ENCODE measurements at regions of chr15 and their contacts with region 1.

Region 1: GRCh38 chr15:93816815-93817214 is 414.5 kb upstream of the MCTP2 start:
- DNase-seq: no peak
- H3K4me3 ChIP-seq: no peak overlapping the region
- H3K27ac ChIP-seq: no peak overlapping the region
- H3K4me1 ChIP-seq: no peaks in the 10 kb centered on the region
- H3K27me3 ChIP-seq: peaks cover 0 to 5% of the 10 kb centered on the region in 2 donors
- CTCF ChIP-seq: no peak

Region 2: GRCh38 chr15:93848490-93848889 is 31.7 kb after region 1 on chr15:
- intact Hi-C with region 1: loop called (anchors 1 kb)
- DNase-seq: no peak
- H3K4me3 ChIP-seq: no peak overlapping the region
- H3K27ac ChIP-seq: no peak overlapping the region
- H3K4me1 ChIP-seq: no peaks in the 10 kb centered on the region
- H3K27me3 ChIP-seq: no peaks in the 10 kb centered on the region
- CTCF ChIP-seq: no peak